WTC11 (cell line): ENCODE measurements at regions of chr1 and their contacts with region 1.

Region 1: GRCh38 chr1:41560496-41560895 is 76.0 kb upstream of the EDN2 start:
- DNase-seq: no peak
- ATAC-seq: no peak
- H3K4me3 Mint-ChIP-seq: no peak overlapping the region
- H3K27ac Mint-ChIP-seq: no peak overlapping the region
- H3K4me1 Mint-ChIP-seq: no peaks in the 10 kb centered on the region
- H3K27me3 Mint-ChIP-seq: peaks cover 3% of the 10 kb centered on the region
- CTCF ChIP-seq: no peak

Region 2: GRCh38 chr1:41404308-41404761 is 156.2 kb before region 1 on chr1:
- CTCF ChIA-PET with region 1: no interaction called
- POLR2A ChIA-PET with region 1: no interaction called
- DNase-seq: peak; percentile 53
- ATAC-seq: peak; percentile 69
- H3K4me3 Mint-ChIP-seq: 0 out of 2 replicates have a peak overlapping the region, but pooled peaks have one; percentile 12
- H3K27ac Mint-ChIP-seq: no peak overlapping the region
- H3K4me1 Mint-ChIP-seq: peaks cover 39% of the 10 kb centered on the region
- H3K27me3 Mint-ChIP-seq: peaks cover 19% of the 10 kb centered on the region
- CTCF ChIP-seq: no peak

Region 3: GRCh38 chr1:42316292-42316691 is 755.8 kb after region 1 on chr1:
- CTCF ChIA-PET with region 1: no interaction called
- POLR2A ChIA-PET with region 1: interaction called, 10 read pairs
- DNase-seq: no peak
- ATAC-seq: no peak
- H3K4me3 Mint-ChIP-seq: no peak overlapping the region
- H3K27ac Mint-ChIP-seq: no peak overlapping the region
- H3K4me1 Mint-ChIP-seq: peaks cover 52% of the 10 kb centered on the region
- H3K27me3 Mint-ChIP-seq: no peaks in the 10 kb centered on the region
- CTCF ChIP-seq: no peak